Calu3 (cell line): ENCODE measurements at regions of chr1 and their contacts with region 1.

Region 1: GRCh38 chr1:174999216-174999925 is 376 bp upstream of the CACYBP start:
- DNase-seq: peak; percentile 97
- H3K4me3 Mint-ChIP-seq: no peak overlapping the region
- H3K27ac Mint-ChIP-seq: no peak overlapping the region
- H3K4me1 Mint-ChIP-seq: peaks cover 47% of the 10 kb centered on the region
- H3K27me3 Mint-ChIP-seq: no peaks in the 10 kb centered on the region
- CTCF ChIP-seq: no peak

Region 2: DNA sequence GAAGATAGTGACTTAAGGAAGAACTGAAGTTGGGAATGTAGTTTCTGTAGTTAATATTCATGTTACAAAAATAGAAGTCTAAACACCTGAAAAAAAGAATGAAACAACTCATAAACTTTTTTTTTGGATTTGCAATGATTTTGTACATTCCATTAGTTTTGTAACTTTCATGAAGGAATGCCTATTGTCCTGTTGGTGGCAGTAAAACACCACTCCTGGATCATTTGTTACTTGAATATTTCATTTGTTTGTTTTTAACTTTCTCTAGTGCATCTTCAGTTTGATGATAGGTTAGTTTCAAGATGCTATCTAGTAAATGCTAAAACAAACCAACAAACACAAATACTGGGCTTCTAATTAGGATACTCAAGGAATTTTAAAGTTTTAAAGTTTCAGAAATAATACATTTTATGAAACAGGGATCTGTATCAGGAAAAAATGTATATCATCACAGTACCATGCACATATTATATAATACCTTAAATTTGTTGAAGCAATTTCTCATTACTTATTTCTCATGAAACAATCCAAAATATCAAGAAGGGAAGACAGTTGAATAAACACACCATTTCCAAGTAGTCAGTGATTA is 229.3 kb before region 1 on chr1:
- CTCF ChIA-PET with region 1: no interaction called
- intact Hi-C with region 1: loop called (anchors 1 kb)
- DNase-seq: no peak
- H3K4me3 Mint-ChIP-seq: no peak overlapping the region
- H3K27ac Mint-ChIP-seq: no peak overlapping the region
- H3K4me1 Mint-ChIP-seq: peaks cover 30% of the 10 kb centered on the region
- H3K27me3 Mint-ChIP-seq: no peaks in the 10 kb centered on the region
- CTCF ChIP-seq: peak; percentile 43

Region 3: GRCh38 chr1:174874331-174875053 is 124.9 kb before region 1 on chr1:
- CTCF ChIA-PET with region 1: interaction called, 5 read pairs
- intact Hi-C with region 1: loop called (anchors 2 kb)
- DNase-seq: peak; percentile 55
- H3K4me3 Mint-ChIP-seq: peak overlapping the region; percentile 72
- H3K27ac Mint-ChIP-seq: peak overlapping the region; percentile 83
- H3K4me1 Mint-ChIP-seq: peaks cover 44% of the 10 kb centered on the region
- H3K27me3 Mint-ChIP-seq: no peaks in the 10 kb centered on the region
- CTCF ChIP-seq: no peak

Region 4: GRCh38 chr1:174968750-174969244 is 30.6 kb before region 1 on chr1:
- CTCF ChIA-PET with region 1: interaction called, 3 read pairs
- intact Hi-C with region 1: loop called (anchors 2 kb)
- DNase-seq: peak; percentile 57
- H3K4me3 Mint-ChIP-seq: peak overlapping the region; percentile 1
- H3K27ac Mint-ChIP-seq: peak overlapping the region; percentile 81
- H3K4me1 Mint-ChIP-seq: peaks cover 76% of the 10 kb centered on the region
- H3K27me3 Mint-ChIP-seq: no peaks in the 10 kb centered on the region
- CTCF ChIP-seq: no peak

Region 5: DNA sequence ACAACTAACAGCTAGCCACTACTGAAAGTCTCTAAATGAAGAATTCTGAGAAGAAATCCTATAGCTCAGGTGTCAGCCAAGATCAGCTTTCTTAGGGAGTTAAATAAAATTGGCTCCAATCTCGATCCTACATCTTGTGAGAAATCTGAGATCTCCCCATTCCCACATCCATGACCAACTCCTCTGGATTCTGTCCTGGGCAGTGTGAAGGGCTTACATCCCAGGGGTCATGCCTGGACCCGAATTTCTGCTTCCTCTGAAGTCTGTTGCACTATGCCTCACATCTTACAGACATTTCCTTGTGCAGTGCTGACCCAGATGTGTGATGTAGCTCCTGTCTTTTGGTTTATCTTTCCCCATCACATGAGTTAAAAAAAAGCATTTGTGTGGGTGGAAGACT is 63.5 kb after region 1 on chr1:
- CTCF ChIA-PET with region 1: no interaction called
- intact Hi-C with region 1: no loop called
- DNase-seq: no peak
- H3K4me3 Mint-ChIP-seq: no peak overlapping the region
- H3K27ac Mint-ChIP-seq: no peak overlapping the region
- H3K4me1 Mint-ChIP-seq: no peaks in the 10 kb centered on the region
- H3K27me3 Mint-ChIP-seq: peaks cover 54% of the 10 kb centered on the region
- CTCF ChIP-seq: no peak

Region 6: DNA sequence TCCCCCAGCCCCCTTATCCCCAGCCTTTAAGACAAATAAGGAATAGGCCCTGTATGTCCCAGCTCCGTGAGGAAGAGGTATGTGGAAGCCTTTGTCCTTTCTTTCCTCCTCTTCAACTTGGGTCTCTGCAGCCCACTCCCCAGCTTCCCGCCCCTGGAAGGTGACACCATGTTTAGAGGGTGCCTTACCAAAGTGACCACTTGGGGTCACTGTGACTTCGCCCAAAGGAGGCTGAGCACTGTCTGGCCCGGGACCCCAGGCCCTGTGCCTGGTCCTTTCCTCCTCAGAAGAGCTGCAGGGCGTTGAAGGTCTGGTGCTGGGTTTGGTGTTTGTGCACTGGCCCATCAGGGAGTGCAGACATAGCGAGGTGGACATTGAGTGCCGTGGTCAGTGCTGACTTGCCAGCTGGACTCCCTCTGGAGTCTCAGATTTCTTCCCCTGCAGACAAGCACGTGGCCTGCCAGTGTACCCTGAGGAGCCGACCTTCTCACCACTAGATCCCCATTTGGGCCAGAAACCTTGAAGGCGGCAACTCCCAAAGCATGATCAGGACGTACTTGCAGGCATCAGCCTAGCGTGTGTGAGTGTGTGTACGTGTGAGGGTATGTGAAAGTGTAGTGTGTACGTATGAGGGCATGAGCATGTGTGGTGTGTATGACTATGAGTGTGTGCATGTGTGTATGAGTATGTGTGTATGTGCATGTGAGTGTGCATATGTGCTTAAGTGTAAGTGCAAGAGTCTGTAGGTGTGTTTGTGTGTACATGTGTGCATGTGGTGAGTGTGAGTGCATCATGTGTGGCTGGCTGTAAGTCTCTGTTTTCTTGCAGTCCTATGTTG is 374.6 kb after region 1 on chr1:
- CTCF ChIA-PET with region 1: interaction called, 10 read pairs
- intact Hi-C with region 1: no loop called
- DNase-seq: peak; percentile 56
- H3K4me3 Mint-ChIP-seq: no peak overlapping the region
- H3K27ac Mint-ChIP-seq: no peak overlapping the region
- H3K4me1 Mint-ChIP-seq: no peaks in the 10 kb centered on the region
- H3K27me3 Mint-ChIP-seq: peaks cover 98% of the 10 kb centered on the region
- CTCF ChIP-seq: peak; percentile 65

Region 7: DNA sequence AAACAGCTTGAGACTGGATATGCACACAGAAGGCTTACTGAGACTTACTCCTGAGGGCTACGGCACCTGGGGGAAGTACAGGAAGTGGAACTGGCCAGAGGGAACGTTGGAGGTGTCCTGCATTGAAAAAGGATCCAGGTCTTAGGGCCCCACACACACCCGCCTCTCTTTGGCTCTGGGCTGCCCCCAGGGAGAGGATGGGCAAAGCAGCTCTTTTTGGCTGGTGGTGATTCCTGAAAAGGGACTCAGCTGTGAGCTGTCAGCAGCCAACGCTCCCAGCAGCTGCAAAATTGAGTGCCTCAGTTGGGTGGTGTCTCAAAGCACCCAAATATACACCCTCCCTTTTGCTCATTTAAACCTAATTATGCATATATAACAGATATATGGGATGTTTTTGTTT is 530.8 kb after region 1 on chr1:
- CTCF ChIA-PET with region 1: no interaction called
- intact Hi-C with region 1: no loop called
- DNase-seq: no peak
- H3K4me3 Mint-ChIP-seq: no peak overlapping the region
- H3K27ac Mint-ChIP-seq: no peak overlapping the region
- H3K4me1 Mint-ChIP-seq: no peaks in the 10 kb centered on the region
- H3K27me3 Mint-ChIP-seq: peaks cover 57% of the 10 kb centered on the region
- CTCF ChIP-seq: no peak